ENCODE measurements at regions of chr10 and their contacts with region 1.

Region 1: DNA sequence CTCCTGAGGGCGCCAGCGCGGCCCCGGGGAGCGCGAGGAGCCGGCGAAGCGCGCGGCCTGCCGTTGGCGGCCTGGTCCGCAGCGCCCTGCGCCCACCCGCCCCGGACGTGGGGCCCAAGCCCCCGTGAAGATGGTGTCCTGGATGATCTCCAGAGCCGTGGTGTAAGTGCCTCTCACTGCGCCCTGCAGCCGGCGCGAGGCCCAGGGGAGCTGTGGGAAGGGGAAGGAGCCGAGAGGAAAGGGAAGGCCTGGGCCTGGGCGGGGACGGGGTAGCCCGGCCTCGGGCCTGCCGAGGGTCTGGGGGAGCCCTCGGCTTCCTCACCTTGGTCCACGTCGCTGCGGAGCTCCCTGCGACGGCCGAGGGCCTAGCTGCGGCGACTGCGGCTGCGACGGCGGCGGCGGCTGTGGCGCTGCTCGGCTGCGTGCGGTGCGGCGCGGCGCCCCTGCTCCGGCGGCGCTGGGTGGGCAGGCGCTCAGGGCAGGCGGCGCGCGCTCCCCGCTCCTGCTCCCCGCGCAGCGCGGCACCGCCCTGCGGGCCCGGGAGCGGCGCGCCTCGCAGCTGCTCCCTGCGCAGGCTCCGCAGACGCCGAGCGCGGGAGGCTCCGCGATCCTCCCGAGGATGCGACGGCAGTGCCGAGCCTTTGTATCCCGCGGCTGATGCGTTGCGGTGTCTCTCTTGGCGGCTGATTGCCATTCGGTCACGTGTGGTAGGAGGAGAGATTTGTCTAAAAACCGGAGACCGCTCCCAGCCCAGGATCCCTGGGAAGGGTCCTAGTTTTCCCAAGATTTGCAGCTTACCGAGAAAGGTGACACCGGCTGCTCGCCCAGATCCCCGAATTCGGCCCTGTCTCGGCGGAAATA is 445 bp downstream of the REEP3 start:
- DNase-seq: peak; percentile 46
- ATAC-seq: peak; percentile 89
- H3K4me3 ChIP-seq: peak overlapping the region; percentile 74 to 94 (median 87)
- H3K27ac ChIP-seq: peak overlapping the region; percentile 99
- H3K4me1 ChIP-seq: peaks cover 76% of the 10 kb centered on the region
- H3K27me3 ChIP-seq: no peaks in the 10 kb centered on the region
- CTCF ChIP-seq: no peak
- EP300 ChIP-seq: peak in 1 of 2 experiments; percentile 32; a peak in 1 of 4 replicates
- POLR2A ChIP-seq: peak; percentile 65
- RAD21 ChIP-seq: peak; percentile 47

Region 2: GRCh38 chr10:63217120-63217605 is 304.5 kb before region 1 on chr10:
- CTCF ChIA-PET with region 1: no interaction called
- POLR2A ChIA-PET with region 1: no interaction called
- in situ Hi-C with region 1: no loop called
- intact Hi-C with region 1: loop called (anchors 2 kb)
- DNase-seq: peak; percentile 44
- ATAC-seq: peak; percentile 88
- H3K4me3 ChIP-seq: no peak overlapping the region
- H3K27ac ChIP-seq: no peak overlapping the region
- H3K4me1 ChIP-seq: no peaks in the 10 kb centered on the region
- H3K27me3 ChIP-seq: no peaks in the 10 kb centered on the region; a peak in 1 of 5 replicates
- CTCF ChIP-seq: peak; percentile 57
- EP300 ChIP-seq: no peak
- POLR2A ChIP-seq: no peak
- RAD21 ChIP-seq: no peak

Region 3: DNA sequence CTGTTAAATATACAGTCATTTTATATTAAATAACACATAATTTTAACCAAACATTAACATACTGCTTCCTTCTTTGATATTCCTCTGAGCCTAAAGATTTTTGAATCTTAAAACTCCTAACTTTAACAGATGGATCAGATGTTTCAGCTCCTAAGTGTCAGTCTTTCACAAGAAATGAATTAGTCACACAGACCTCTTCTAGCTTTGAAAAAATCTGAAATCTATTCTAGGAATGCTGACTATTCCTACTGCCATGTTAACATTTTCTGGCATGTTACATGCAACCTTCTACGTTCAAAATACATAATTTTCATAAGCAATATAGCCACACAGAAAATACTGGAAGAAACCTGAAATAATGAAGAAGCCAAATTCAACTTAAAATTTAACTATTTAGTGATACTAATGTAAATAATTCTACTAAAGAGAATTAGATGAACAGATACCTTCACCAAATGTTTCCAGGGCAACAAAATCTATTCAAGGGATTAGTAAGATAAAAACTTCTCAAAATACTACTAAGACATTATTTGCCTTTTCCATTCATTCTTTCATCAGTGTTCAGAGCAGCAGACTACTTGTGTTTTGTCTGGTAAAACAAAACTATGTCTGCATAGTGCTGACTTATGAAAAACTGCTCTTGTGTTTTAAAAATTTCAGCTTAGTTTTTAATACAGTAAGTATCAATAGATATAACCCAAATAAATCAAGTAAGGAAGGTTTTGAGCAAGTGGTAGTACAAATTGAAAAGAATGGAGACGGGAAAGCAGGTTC is 65.0 kb before region 1 on chr10:
- CTCF ChIA-PET with region 1: no interaction called
- POLR2A ChIA-PET with region 1: no interaction called
- in situ Hi-C with region 1: no loop called
- intact Hi-C with region 1: no loop called
- DNase-seq: no peak
- ATAC-seq: no peak
- H3K4me3 ChIP-seq: no peak overlapping the region
- H3K27ac ChIP-seq: no peak overlapping the region
- H3K4me1 ChIP-seq: peaks cover 14% of the 10 kb centered on the region
- H3K27me3 ChIP-seq: no peaks in the 10 kb centered on the region
- CTCF ChIP-seq: no peak
- EP300 ChIP-seq: no peak
- POLR2A ChIP-seq: no peak
- RAD21 ChIP-seq: no peak

Region 4: DNA sequence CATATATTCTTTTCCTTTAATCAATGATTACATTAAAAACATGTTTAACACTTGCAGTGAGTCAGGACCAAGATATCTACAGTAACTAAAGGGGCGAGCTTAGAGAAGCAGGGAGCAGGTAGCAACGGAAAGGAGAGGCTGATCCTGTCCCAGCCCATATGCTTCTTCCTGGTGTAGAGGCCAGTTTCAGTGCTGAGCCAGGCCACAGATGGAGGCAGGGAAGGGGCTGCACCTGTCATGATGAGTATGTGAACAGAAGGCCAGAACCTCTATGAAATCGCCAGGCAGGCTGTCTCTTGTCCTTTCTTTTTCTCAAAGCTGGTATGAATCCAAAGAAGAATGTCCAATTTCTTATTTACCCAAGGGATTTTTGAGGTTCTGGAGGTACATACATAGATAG is 15.9 kb after region 1 on chr10:
- CTCF ChIA-PET with region 1: no interaction called
- POLR2A ChIA-PET with region 1: no interaction called
- in situ Hi-C with region 1: no loop called
- intact Hi-C with region 1: no loop called
- DNase-seq: no peak
- ATAC-seq: no peak
- H3K4me3 ChIP-seq: no peak overlapping the region
- H3K27ac ChIP-seq: no peak overlapping the region
- H3K4me1 ChIP-seq: no peaks in the 10 kb centered on the region
- H3K27me3 ChIP-seq: no peaks in the 10 kb centered on the region
- CTCF ChIP-seq: no peak
- EP300 ChIP-seq: no peak
- POLR2A ChIP-seq: no peak
- RAD21 ChIP-seq: no peak

Measured in HepG2 (cell line).